B cell (primary cell): ENCODE measurements at regions of chr4 and their contacts with region 1.

Region 1: GRCh38 chr4:2696423-2696822 is 59.7 kb downstream of the TNIP2 start:
- DNase-seq: peak; percentile 93
- ATAC-seq: peak; percentile 96
- H3K4me3 ChIP-seq: peak overlapping the region; percentile 17 to 69 (median 35)
- H3K4me3 Mint-ChIP-seq: peak overlapping the region; percentile 78
- H3K27ac ChIP-seq: peak overlapping the region; percentile 85 to 87
- H3K27ac Mint-ChIP-seq: peak overlapping the region; percentile 93
- H3K4me1 ChIP-seq: peaks cover 47 to 55% of the 10 kb centered on the region in 2 donors
- H3K4me1 Mint-ChIP-seq: peaks cover 55% of the 10 kb centered on the region
- H3K27me3 ChIP-seq: no peaks in the 10 kb centered on the region
- H3K27me3 Mint-ChIP-seq: no peaks in the 10 kb centered on the region
- CTCF ChIP-seq: no peak

Region 2: DNA sequence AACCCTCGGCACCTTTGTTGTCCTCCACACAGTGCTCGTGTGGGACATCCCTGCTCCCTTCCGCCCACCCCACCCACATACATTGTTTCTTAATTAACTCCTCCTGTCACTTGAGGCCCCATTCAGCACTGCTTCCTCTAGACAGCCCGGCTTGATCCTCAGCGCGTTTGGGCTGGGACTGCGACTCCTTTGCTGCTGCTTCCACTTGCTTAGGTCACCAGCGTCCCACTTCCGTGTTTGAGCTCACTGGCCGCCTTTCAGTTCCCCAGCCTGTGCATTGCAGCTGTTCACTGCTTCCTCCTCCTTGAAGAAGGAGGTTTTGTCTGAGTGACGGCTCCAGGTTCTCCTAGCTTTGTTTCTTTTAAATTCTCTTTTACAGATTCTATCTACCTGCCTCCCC is 211.4 kb before region 1 on chr4:
- CTCF ChIA-PET with region 1: no interaction called
- POLR2A ChIA-PET with region 1: no interaction called
- intact Hi-C with region 1: no loop called
- DNase-seq: peak; percentile 90
- ATAC-seq: peak; percentile 93
- H3K4me3 ChIP-seq: peak overlapping the region; percentile 17 to 54 (median 28)
- H3K4me3 Mint-ChIP-seq: peak overlapping the region; percentile 72
- H3K27ac ChIP-seq: peak overlapping the region; percentile 76 to 89
- H3K27ac Mint-ChIP-seq: peak overlapping the region; percentile 85
- H3K4me1 ChIP-seq: peaks cover 78 to 88% of the 10 kb centered on the region in 2 donors
- H3K4me1 Mint-ChIP-seq: peaks cover 85% of the 10 kb centered on the region
- H3K27me3 ChIP-seq: no peaks in the 10 kb centered on the region
- H3K27me3 Mint-ChIP-seq: no peaks in the 10 kb centered on the region
- CTCF ChIP-seq: no peak

Region 3: DNA sequence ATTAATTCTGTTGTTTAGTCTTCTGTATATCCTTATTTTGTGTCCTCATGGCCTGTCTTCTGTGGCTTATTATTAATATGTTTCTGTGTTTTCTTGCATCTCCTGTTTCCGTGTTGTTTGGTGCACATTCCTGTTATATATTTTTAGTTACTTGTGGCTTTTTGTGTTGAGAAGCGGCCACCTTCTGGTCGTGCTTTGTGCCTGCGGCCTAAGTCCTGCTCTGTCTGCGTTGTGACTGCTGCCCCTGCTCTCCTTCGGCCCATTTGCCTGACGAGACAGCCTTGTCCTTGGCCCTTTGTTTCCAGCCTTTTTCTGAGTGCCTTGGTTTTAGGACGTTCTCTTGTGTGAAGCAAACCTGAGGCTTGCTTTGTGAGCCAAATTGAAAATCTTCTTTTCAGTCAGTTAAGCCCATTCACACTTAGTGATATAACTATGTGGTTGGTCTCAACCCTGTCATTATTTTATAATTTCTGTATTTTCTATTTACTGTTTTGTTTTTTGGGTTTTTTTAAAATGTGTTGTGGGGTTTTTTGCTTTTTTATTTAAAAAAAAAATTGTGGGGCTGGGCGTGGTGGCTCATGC is 15.9 kb after region 1 on chr4:
- CTCF ChIA-PET with region 1: interaction called, 3 read pairs
- POLR2A ChIA-PET with region 1: no interaction called
- intact Hi-C with region 1: loop called (anchors 2 kb)
- DNase-seq: no peak
- ATAC-seq: no peak
- H3K4me3 ChIP-seq: no peak overlapping the region
- H3K4me3 Mint-ChIP-seq: no peak overlapping the region
- H3K27ac ChIP-seq: peak overlapping the region in 1 of 2 donors; percentile 26
- H3K27ac Mint-ChIP-seq: no peak overlapping the region
- H3K4me1 ChIP-seq: peaks cover 5 to 10% of the 10 kb centered on the region in 2 donors
- H3K4me1 Mint-ChIP-seq: peaks cover 20% of the 10 kb centered on the region
- H3K27me3 ChIP-seq: no peaks in the 10 kb centered on the region
- H3K27me3 Mint-ChIP-seq: no peaks in the 10 kb centered on the region
- CTCF ChIP-seq: no peak

Region 4: DNA sequence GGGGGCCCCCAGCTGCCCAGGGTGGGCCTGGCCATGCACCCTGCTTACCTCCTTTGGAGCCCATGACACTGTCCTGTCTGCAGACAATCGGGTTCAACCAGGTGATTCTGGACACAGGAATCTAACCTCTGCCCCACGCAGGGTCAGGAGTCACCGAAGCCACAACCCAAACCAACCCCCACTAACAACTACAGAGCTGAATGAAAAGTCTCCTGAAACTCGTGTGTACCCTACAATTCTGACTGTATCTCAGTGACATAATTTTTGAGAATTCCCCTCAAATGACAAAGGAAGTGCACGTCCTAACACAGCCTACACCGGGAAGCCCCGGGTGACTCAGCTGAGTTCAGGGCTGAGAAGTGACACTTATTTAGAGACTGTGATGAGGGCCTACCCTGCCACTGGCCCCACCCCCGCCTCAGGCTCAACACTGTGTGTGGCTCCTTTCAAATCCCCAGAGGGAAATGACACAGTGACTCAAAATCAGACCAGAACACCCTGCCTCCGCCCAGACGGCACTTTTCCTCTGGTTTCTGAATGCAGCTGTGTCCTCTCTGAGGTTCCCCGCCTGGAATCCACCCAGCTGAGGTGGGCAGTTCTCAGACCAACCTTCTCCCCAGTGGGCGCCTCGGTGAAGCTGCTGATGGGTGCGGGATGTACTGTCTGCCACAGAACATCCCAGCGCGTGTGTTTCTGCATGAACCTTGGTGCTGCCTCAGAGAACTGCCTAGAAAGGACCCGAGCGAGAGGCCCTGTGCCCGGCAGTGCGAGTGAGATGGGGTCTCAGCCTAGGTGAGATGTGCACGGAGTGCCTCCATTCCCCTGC is 49.8 kb after region 1 on chr4:
- CTCF ChIA-PET with region 1: interaction called, 9 read pairs
- POLR2A ChIA-PET with region 1: interaction called, 3 read pairs
- intact Hi-C with region 1: loop called (anchors 1 kb)
- DNase-seq: peak; percentile 95
- ATAC-seq: peak; percentile 96
- H3K4me3 ChIP-seq: peak overlapping the region in 2 of 5 experiments; percentile 5 to 17
- H3K4me3 Mint-ChIP-seq: peak overlapping the region; percentile 70
- H3K27ac ChIP-seq: peak overlapping the region; percentile 93 to 95
- H3K27ac Mint-ChIP-seq: peak overlapping the region; percentile 93
- H3K4me1 ChIP-seq: peaks cover 30 to 44% of the 10 kb centered on the region in 2 donors
- H3K4me1 Mint-ChIP-seq: peaks cover 46% of the 10 kb centered on the region
- H3K27me3 ChIP-seq: no peaks in the 10 kb centered on the region
- H3K27me3 Mint-ChIP-seq: no peaks in the 10 kb centered on the region
- CTCF ChIP-seq: no peak

Region 5: DNA sequence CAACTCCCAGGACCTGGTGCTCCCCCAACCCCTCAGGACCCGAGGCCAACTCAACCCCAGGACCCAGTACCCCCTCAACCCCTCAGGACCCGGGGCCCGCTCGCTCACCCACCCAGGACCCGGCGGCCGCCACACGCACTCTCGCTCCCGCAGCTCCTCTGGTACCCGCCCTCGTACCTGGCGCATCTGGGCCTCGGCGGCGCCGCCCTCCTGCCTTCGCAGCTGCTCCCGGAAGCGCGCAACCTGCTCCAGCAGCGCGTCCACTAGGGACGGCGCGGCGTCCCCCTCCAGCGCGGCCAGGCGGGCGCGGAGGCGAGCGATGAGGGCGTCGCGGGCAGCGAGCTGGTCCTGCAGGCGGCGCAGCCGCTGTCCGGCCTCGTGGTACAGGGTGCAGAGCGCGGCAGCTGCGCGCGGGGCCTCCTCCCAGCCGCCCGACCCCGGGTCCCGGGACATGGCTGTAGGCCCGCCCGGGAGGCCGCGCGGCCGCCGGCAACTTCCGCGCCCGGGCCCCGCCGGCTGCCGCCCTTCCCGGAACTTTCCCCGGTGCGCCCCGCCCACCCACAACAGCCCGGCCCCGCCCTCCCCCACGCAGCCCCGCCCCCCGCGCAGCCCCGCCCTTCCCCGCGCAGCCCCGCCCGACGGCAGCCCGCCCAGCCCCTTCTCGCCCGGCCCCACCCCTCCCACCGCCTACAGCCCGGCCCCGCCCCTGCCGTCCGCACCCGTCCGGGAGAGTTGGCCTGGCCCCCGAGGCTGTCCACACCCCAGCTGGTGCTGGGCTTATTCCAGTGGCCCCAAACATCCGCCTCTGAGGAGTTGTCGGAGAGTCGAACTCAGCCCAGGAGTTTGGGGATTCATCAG is 59.6 kb after region 1 on chr4 and contains the start of gene TNIP2:
- CTCF ChIA-PET with region 1: interaction called, 5 read pairs
- POLR2A ChIA-PET with region 1: no interaction called
- intact Hi-C with region 1: loop called (anchors 2 kb)
- DNase-seq: peak; percentile 88
- ATAC-seq: peak; percentile 86
- H3K4me3 ChIP-seq: peak within 1 kb of the TSS in 4 of 5 experiments; percentile 61 to 78 (median 68)
- H3K4me3 Mint-ChIP-seq: peak within 1 kb of the TSS; percentile 83
- H3K27ac ChIP-seq: peak within 1 kb of the TSS; percentile 38 to 83
- H3K27ac Mint-ChIP-seq: peak within 1 kb of the TSS; percentile 79
- H3K4me1 ChIP-seq: peaks cover 11 to 21% of the 10 kb centered on the region in 2 donors
- H3K4me1 Mint-ChIP-seq: peaks cover 31% of the 10 kb centered on the region
- H3K27me3 ChIP-seq: no peaks in the 10 kb centered on the region
- H3K27me3 Mint-ChIP-seq: no peaks in the 10 kb centered on the region
- CTCF ChIP-seq: peak; percentile 31
- total RNA-seq, gene TNIP2: 47.6 and 51.0 TPM in 2 replicates